Activated CD8-positive, alpha-beta T cell treated with anti-CD3 and anti-CD28 coated beads for 36 hours (primary cell): ENCODE measurements at regions of chr7 and their contacts with region 1.

Region 1: DNA sequence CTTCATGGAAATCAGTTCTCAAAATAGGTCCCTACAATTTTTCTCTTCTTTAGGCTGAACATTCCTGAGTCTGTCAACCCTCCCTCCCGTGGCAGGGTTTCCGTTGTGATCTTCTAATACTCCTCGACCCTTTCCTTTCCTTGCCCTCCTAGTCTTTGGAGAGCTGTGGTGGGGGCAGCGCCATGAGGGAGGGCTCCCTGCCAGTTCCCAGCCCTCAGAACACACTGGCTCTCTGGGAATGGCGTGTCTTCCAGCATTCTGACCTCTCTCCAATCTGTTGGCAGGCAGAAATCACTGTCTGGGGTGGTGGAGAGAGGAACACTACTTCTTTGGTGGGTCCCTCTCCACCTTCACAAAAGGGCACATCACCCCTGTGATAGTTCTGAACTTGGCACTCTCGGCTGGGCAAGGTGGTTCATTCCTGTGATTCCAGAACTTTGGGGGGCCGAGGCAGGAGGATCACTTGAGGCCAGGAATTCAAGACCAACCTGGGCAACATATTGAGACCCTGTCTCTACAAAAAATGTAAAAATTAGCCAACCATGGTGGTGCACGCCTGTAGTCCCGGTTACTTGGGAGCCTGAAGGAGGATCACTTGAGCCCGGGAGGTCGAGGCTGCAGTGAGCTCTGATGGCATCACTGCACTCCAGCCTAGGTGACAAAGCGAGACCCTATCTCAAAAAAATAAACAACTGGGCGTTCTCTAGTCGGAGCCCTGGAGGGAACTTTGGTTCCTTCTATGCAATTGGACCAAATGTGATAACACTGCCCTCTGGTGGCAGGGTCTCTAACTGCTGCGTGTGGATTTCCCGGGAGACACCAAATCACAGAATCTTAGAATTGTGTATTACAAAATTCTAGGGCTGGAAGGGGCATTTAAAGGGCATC is 13.1 kb upstream of the ARPC1A start:
- DNase-seq: peak; percentile 85
- ATAC-seq: peak; percentile 59
- H3K4me3 Mint-ChIP-seq: peak overlapping the region; percentile 14
- H3K27ac Mint-ChIP-seq: no peak overlapping the region
- H3K4me1 Mint-ChIP-seq: peaks cover 12% of the 10 kb centered on the region
- H3K27me3 Mint-ChIP-seq: peaks cover 1% of the 10 kb centered on the region
- CTCF ChIP-seq: peak; percentile 94

Region 2: DNA sequence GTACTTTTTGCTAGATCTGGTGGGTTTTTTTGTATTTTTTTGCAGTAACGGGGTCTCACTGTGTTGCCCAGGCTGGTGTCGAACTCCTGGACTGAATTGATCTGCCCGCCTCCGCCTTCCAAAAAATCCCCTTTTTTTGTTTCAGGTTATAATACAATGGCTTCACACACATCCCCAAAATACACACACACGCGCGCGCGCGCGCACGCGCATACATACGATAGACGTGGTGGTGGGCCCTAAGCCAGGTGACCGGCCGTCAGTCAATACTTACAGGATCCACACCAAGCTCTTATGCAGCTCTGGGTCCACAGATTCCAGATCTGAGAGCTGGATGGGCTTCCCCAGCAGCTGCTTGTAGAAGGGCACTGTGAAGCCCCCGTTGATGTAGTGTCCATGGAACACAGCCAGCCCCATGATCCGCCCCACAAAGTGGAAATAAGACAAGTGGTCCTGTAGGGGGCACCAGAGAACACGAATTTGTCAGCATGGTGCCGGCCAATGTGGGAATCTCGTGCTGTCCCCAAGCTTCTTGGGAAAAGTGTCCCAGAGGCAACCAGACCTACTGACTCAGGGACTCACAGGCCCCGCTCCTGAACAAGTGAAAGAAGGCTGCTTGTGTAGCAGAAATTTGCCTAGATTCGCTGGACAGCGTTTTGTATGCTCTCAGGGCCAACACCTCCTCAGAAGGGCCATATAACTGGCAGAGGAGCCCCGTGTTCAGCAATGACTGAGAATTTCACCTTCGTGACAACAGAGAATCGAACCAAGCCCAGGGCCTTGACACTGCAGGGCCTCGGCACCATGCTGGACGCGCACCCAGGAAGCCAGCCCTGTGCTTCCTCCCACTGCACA is 272.2 kb before region 1 on chr7:
- CTCF ChIA-PET with region 1: interaction called, 21 read pairs
- POLR2A ChIA-PET with region 1: no interaction called
- intact Hi-C with region 1: loop called (anchors 2 kb)
- DNase-seq: peak; percentile 72
- ATAC-seq: peak; percentile 77
- H3K4me3 Mint-ChIP-seq: no peak overlapping the region
- H3K27ac Mint-ChIP-seq: peak overlapping the region; percentile 59
- H3K4me1 Mint-ChIP-seq: no peaks in the 10 kb centered on the region
- H3K27me3 Mint-ChIP-seq: no peaks in the 10 kb centered on the region
- CTCF ChIP-seq: peak; percentile 84

Region 3: DNA sequence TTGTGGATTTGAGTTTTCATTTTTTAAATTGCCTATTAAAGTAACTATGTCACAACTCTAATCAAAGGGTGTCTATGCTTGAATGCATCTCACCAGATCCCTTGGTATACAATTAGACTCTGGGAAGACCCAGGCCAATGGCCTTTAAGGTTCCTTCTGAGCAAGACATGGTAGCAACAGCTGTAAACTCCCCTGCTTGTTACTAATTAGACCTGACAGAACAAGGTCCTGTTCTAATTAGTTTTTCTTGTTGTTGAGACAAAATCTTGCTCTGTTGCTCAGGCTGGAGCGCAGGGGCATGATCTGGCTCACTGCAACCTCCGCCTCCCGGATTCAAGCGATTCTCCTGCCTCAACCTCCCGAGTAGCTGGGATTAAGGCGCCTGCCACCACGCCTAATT is 37.1 kb before region 1 on chr7:
- CTCF ChIA-PET with region 1: interaction called, 6 read pairs
- POLR2A ChIA-PET with region 1: no interaction called
- intact Hi-C with region 1: loop called (anchors 2 kb)
- DNase-seq: no peak
- ATAC-seq: no peak
- H3K4me3 Mint-ChIP-seq: no peak overlapping the region
- H3K27ac Mint-ChIP-seq: no peak overlapping the region
- H3K4me1 Mint-ChIP-seq: peaks cover 10% of the 10 kb centered on the region
- H3K27me3 Mint-ChIP-seq: no peaks in the 10 kb centered on the region
- CTCF ChIP-seq: no peak

Region 4: GRCh38 chr7:99325545-99326407 is 13.2 kb after region 1 on chr7 and contains the start of gene ARPC1A:
- CTCF ChIA-PET with region 1: interaction called, 11 read pairs
- POLR2A ChIA-PET with region 1: no interaction called
- intact Hi-C with region 1: no loop called
- DNase-seq: peak; percentile 91
- ATAC-seq: peak; percentile 83
- H3K4me3 Mint-ChIP-seq: peak within 1 kb of the TSS; percentile 99
- H3K27ac Mint-ChIP-seq: peak within 1 kb of the TSS; percentile 90
- H3K4me1 Mint-ChIP-seq: peaks cover 36% of the 10 kb centered on the region
- H3K27me3 Mint-ChIP-seq: no peaks in the 10 kb centered on the region
- CTCF ChIP-seq: no peak
- total RNA-seq, gene ARPC1A: 45.4 to 45.8 TPM